ENCODE measurements at regions of chr16 and their contacts with region 1.

Region 1: DNA sequence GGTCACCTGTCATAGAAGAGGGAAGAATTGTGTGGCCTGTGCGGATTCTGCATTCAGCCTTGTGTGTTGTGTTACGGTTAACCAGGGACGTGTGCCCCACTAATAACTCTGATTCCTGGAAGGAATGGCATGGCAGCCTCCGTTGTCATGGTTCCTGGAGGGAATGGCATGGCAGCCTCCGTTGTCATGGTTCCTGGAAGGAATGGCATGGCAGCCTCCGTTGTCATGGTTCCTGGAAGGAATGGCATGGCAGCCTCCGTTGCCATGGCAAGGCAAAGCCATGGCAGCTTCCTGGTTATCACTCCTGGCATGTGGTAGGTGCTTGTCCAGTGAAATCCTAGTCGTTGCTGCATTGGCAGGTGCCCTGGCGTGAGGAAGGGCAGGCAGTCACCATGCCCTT is 8.9 kb downstream of the SPG7 start:
- DNase-seq: no peak
- H3K4me3 ChIP-seq: no peak overlapping the region
- H3K27ac ChIP-seq: no peak overlapping the region
- H3K4me1 ChIP-seq: no peaks in the 10 kb centered on the region
- H3K27me3 ChIP-seq: no peaks in the 10 kb centered on the region
- CTCF ChIP-seq: no peak

Region 2: DNA sequence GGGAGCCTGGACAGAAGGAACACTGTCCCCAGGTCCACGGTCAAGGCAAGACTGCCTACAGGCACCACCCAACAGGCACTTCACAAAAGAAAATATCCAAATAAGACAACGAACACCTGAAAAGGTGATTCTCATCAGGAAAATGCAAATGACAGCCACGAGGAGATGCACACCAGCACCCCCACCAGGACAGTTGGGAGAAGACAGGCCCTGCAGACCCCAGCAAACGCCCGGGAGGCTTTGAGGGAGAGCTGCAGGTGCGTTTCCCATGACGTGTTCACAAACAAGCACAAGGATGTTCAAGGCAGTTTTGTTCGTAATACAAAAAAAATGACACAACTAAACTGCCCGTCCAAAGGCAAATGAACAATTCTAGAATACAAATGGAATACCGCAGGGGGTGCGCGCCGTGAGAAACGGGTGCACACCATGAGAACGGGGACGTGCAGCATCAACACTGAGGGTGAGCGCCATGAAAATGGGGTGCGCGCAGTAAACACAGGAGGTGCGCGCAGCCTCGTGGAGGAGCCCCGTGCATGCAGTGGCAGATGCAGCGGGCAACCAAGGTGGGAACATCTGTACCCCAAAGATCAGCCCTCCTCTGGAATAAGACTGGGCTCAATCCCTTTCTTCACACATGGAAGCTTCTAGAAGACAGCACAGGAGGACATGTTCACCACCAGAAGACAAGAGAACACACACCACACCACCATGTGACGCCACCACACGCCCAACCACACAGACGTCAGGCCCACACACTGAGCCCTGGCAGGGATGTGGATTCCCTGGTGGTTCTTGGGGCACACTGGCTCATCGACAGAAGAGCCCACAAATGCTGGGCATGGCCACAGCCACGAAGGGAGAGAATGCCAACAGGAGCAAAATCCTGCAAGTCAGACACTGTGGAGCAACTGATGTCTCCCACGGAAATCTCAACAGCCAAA is 208.5 kb before region 1 on chr16:
- CTCF ChIA-PET with region 1: no interaction called
- POLR2A ChIA-PET with region 1: interaction called, 12 read pairs
- intact Hi-C with region 1: no loop called
- DNase-seq: no peak
- H3K4me3 ChIP-seq: no peak overlapping the region
- H3K27ac ChIP-seq: no peak overlapping the region
- H3K4me1 ChIP-seq: peaks cover 3% of the 10 kb centered on the region
- H3K27me3 ChIP-seq: no peaks in the 10 kb centered on the region
- CTCF ChIP-seq: peak; percentile 64; the same call in 1 of the 2 replicates

Region 3: DNA sequence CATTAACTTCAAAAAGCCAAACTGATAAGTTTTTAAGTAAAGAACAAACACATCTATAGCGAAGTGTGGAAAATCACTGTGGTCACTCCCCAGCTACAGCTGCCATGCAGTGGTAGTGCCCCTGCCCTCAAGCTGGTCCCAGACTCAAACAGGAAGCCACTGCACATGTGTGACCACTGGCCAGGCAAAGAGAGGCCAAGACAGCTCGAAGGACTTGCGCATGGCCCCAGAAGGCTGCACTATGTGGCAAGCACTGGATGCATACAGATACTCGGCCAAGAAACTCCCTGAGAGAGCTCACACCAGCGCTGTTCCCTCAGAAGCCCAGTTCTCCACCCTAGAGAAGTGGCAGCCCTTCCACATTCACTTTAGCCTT is 109.2 kb before region 1 on chr16:
- CTCF ChIA-PET with region 1: interaction called, 11 read pairs
- POLR2A ChIA-PET with region 1: no interaction called
- intact Hi-C with region 1: no loop called
- DNase-seq: no peak
- H3K4me3 ChIP-seq: no peak overlapping the region
- H3K27ac ChIP-seq: no peak overlapping the region
- H3K4me1 ChIP-seq: no peaks in the 10 kb centered on the region
- H3K27me3 ChIP-seq: no peaks in the 10 kb centered on the region
- CTCF ChIP-seq: no peak

Measured in PC-9 (cell line).